ENCODE measurements at regions of chr17 and their contacts with region 1.

Region 1: DNA sequence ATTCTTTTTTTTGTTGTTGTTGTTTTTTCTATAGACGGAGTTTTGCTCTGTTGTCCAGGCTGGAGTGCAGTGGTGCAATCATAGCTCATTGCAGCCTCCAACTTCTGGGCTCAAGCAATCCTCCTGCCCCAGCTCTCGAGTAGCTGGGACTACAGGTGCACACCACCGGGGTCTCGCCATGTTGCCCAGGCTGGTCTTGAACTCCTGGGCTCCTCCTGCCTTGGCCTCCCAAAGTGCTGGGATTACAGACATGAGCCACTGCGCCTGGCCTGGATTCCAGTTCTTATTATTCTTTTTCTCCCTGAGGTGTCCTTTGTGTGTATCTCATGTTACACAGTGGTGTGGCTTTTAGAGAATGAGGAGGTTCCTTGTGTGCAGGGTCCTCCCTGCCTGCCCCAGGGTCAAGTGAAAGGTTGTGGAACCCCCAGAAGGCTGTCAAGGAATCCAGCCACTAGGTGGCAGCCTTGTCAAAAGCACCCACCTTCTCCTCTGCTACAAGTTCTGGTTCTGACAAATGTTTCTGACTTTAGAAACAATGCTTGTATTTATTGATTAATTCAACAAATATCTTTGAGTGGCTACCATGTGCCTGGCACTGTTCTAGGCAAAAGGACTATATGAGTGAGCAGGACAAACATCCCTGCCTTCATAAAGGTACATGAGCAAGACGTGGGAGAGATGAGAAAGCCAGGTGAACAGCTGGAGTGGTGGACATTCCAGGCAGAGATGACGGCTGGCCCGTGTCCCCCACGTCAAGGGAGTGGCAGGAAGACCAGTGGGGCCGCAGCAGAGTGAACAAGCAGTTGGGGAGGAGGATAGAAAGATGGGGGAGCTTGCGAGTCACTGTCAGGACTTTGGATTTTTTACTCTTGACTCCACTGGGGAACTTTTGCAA is 112.4 kb downstream of the SPECC1 start:
- DNase-seq: peak; percentile 59
- ATAC-seq: peak; percentile 80 to 83
- H3K4me3 ChIP-seq: no peak overlapping the region
- H3K27ac ChIP-seq: no peak overlapping the region
- H3K4me1 ChIP-seq: peaks cover 11% of the 10 kb centered on the region
- H3K27me3 ChIP-seq: no peaks in the 10 kb centered on the region
- CTCF ChIP-seq: peak; percentile 86

Region 2: GRCh38 chr17:20009302-20010098 is 112.1 kb before region 1 on chr17 and contains the start of gene SPECC1:
- intact Hi-C with region 1: loop called (anchors 10 kb)
- DNase-seq: peak; percentile 53
- ATAC-seq: peak; percentile 99
- H3K4me3 ChIP-seq: peak within 1 kb of the TSS; percentile 67
- H3K27ac ChIP-seq: peak within 1 kb of the TSS; percentile 59
- H3K4me1 ChIP-seq: peaks cover 23% of the 10 kb centered on the region
- H3K27me3 ChIP-seq: peaks cover 59% of the 10 kb centered on the region
- CTCF ChIP-seq: peak; percentile 95
- total RNA-seq, gene SPECC1: 26.9 TPM

Region 3: DNA sequence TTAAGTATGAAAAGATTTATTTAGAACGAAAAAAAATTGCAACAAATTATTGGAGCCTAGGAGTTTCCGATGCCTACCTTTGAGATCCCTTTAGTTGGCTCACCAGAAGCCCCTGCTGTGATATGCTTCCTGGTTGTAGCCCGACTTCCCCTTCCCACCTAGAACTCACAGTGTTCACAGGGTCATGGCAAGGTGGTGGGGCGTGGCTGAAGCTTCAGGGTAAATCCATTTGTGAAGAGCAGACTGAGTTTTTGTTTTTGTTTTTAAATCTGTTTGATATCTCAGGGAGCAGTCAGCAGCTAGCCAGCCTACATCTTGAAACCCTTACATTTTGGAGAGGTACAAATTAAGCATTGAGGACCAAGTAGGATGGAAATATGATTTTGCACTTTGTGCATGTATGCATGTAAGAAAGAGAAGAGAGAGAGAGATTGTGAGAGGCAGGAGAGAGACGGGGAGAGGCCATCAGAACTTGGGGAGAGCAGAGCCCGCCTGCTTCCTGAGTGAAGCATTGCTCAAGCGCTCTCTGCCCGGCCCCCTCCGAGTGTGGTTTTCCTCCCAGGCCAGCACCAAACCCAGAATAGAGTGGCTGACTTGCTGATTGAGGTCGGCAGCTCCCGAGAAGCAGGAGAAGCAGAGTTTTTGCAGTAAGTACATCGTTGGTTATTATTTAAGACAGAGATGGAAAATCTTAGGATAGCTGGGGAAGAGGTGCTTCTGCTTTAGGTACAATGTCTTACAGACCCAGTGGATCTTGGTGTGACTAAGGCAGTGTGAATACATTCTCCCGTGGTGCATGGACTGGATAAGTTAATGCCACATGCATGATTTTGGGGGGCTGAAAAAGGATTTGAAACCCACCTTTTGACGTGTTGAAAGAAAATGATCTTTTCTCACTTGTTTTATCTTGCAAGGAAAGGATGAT is 48.3 kb before region 1 on chr17:
- intact Hi-C with region 1: no loop called
- DNase-seq: peak; percentile 67
- ATAC-seq: peak; percentile 67 to 79
- H3K4me3 ChIP-seq: peak overlapping the region; percentile 44
- H3K27ac ChIP-seq: peak overlapping the region; percentile 54
- H3K4me1 ChIP-seq: peaks cover 23% of the 10 kb centered on the region
- H3K27me3 ChIP-seq: no peaks in the 10 kb centered on the region
- CTCF ChIP-seq: no peak

Region 4: GRCh38 chr17:20315821-20316220 is 194.2 kb after region 1 on chr17:
- intact Hi-C with region 1: loop called (anchors 10 kb)
- DNase-seq: no peak
- ATAC-seq: no peak
- H3K4me3 ChIP-seq: no peak overlapping the region
- H3K27ac ChIP-seq: no peak overlapping the region
- H3K4me1 ChIP-seq: no peaks in the 10 kb centered on the region
- H3K27me3 ChIP-seq: no peaks in the 10 kb centered on the region
- CTCF ChIP-seq: no peak